CD4-positive, alpha-beta memory T cell (primary cell): ENCODE measurements at regions of chr1 and their contacts with region 1.

Region 1: DNA sequence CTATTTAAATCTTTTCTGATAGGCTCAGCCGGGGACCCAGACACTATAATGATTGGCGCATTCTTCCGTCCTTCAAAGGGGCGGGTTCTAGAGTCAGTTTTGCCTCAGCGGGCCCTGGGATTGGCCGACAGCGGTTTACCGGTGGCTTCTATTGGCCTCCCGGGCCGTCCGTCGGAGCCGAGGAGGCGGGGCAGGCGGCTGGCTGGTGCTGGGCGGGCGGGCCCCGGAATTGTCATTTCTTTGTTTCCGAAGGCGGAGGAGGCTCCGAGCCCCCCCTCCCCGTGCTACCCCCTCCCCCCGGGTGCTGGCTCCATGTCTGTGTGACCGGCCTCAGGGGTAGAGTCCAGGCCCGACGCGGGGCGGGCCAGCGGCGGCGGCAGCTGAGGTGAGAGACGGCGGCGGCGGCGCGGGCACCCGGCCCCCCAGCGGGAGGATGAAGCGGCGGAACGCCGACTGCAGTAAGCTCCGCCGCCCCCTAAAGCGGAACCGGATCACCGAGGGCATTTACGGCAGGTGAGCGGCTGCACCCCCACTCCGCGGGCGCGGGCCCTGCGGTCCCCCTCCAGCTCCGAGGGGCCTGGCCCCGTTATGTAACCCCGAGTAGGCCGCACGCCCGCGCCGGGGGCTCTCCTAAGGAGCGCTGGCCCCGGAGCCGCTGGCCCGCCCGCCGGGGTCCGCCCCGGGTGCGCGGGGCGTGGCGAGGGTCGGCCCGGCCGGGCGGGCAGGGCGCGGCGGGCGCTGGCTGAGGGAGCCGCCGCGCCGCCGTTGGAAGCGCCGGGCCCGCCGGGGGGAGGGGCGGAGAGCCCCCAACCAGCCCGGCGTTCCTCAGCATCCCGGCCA is at the start of gene MACO1:
- DNase-seq: peak; percentile 97 to 99 (median 97)
- H3K4me3 ChIP-seq: peak within 1 kb of the TSS; percentile 49 to 92
- H3K4me3 Mint-ChIP-seq: peak within 1 kb of the TSS; percentile 95 to 99 (median 97)
- H3K27ac ChIP-seq: peak within 1 kb of the TSS; percentile 95
- H3K27ac Mint-ChIP-seq: peak within 1 kb of the TSS; percentile 98 to 100 (median 100)
- H3K4me1 ChIP-seq: peaks cover 49% of the 10 kb centered on the region
- H3K4me1 Mint-ChIP-seq: peaks cover 40 to 56% (median 48%) of the 10 kb centered on the region in 4 donors
- H3K27me3 ChIP-seq: no peaks in the 10 kb centered on the region
- H3K27me3 Mint-ChIP-seq: no peaks in the 10 kb centered on the region
- total RNA-seq, gene MACO1: 20.6 TPM

Region 2: DNA sequence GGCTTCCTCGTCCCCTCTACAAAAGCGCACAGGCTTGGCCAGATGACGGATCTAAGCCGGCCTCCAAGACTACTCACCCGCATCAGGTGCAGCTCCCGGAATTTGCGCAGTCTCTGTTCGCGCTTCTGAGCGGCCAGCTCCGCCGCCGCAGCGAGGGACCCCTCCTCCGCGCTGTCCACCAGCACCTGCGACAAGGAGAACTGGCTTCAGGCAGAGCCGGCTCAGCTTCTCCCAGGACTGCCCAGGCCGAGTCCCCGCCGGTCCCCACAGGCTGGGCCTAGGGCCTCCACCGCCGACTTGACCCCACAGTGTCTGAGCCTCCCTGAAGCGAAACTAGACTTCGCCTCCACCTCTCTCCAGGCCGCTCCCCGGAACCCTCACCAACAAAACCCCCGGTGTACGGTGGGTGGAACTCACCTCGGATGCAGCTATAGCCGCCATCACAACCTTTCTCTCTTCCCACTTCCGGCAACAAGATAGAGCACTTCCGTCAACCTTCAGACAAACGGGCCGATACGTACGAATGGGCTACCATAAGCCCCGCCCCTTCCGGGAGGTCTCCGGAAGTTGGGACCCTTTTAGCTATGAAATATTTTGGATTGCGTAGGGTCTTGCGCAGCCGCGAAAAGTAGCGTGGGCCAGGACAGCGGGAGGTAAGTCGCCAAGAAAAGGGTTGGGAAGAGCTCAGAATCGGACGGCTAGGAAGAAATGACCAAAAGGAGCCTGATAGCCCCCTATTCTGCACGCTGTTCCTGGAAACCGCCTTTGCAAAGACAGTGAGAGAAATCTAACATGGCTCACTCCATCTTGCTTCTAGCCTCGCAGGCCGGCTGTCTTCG is 198.6 kb before region 1 on chr1 and contains the start of gene SYF2:
- CTCF ChIA-PET with region 1: no interaction called
- POLR2A ChIA-PET with region 1: interaction called, 15 read pairs
- intact Hi-C with region 1: no loop called
- DNase-seq: peak; percentile 88 to 95 (median 91)
- H3K4me3 ChIP-seq: peak within 1 kb of the TSS; percentile 80 to 83
- H3K4me3 Mint-ChIP-seq: no peak within 1 kb of the TSS
- H3K27ac ChIP-seq: peak within 1 kb of the TSS; percentile 94
- H3K27ac Mint-ChIP-seq: no peak within 1 kb of the TSS
- H3K4me1 ChIP-seq: peaks cover 27% of the 10 kb centered on the region
- H3K4me1 Mint-ChIP-seq: peaks cover 13 to 26% (median 15%) of the 10 kb centered on the region in 4 donors
- H3K27me3 ChIP-seq: no peaks in the 10 kb centered on the region
- H3K27me3 Mint-ChIP-seq: no peaks in the 10 kb centered on the region
- total RNA-seq, gene SYF2: 64.3 to 66.8 TPM

Region 3: DNA sequence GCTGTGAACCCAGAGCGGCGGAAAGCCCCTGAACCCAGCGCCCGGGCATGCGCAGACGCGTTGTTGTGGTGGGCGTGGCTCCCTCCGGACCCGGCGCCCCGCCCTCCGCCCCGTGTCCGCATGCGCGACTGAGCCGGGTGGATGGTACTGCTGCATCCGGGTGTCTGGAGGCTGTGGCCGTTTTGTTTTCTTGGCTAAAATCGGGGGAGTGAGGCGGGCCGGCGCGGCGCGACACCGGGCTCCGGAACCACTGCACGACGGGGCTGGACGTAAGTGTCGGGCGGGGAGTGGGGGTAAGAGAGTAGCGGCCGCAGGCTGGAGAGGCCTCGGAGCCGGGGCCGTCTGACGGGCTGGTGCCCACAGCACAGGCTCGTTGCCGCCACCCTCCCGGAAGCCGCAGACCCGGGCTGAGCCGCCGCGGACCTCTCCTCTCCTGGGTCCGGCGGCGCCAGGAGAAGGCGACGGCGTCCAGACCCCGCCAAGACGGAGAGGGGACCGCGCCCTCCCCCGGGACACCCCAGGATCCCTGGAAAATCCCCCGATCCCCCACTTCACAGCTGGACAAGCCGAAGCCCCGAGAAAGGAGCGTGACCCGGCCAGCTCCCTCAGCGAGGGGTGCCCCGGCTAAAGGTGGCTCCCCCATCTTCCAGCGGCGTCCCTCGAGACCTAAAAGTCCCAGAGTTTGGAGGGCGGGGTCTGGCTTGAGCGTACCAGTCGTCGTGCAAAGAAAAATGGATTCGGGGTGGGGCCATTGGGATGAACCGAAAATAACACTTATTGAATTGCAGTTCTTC is 92.5 kb before region 1 on chr1 and contains the start of gene TMEM50A:
- CTCF ChIA-PET with region 1: no interaction called
- POLR2A ChIA-PET with region 1: no interaction called
- intact Hi-C with region 1: loop called (anchors 5 kb)
- DNase-seq: peak; percentile 89 to 94 (median 93)
- H3K4me3 ChIP-seq: peak within 1 kb of the TSS; percentile 52 to 88
- H3K4me3 Mint-ChIP-seq: peak within 1 kb of the TSS; percentile 93 to 98 (median 95)
- H3K27ac ChIP-seq: peak within 1 kb of the TSS; percentile 98
- H3K27ac Mint-ChIP-seq: peak within 1 kb of the TSS; percentile 89 to 98 (median 94)
- H3K4me1 ChIP-seq: peaks cover 37% of the 10 kb centered on the region
- H3K4me1 Mint-ChIP-seq: peaks cover 18 to 58% (median 39%) of the 10 kb centered on the region in 4 donors
- H3K27me3 ChIP-seq: no peaks in the 10 kb centered on the region
- H3K27me3 Mint-ChIP-seq: no peaks in the 10 kb centered on the region
- total RNA-seq, gene TMEM50A: 90.9 to 95.3 TPM

Region 4: GRCh38 chr1:25476186-25477097 is 45.6 kb after region 1 on chr1:
- CTCF ChIA-PET with region 1: no interaction called
- POLR2A ChIA-PET with region 1: no interaction called
- intact Hi-C with region 1: loop called (anchors 5 kb)
- DNase-seq: no peak
- H3K4me3 ChIP-seq: no peak overlapping the region
- H3K4me3 Mint-ChIP-seq: no peak overlapping the region
- H3K27ac ChIP-seq: no peak overlapping the region
- H3K27ac Mint-ChIP-seq: peak overlapping the region in 4 of 7 donors; percentile 6 to 75 (median 40)
- H3K4me1 ChIP-seq: peaks cover 30% of the 10 kb centered on the region
- H3K4me1 Mint-ChIP-seq: peaks cover 24 to 45% (median 35%) of the 10 kb centered on the region in 4 donors
- H3K27me3 ChIP-seq: no peaks in the 10 kb centered on the region
- H3K27me3 Mint-ChIP-seq: no peaks in the 10 kb centered on the region

Region 5: GRCh38 chr1:25526753-25527152 is 95.9 kb after region 1 on chr1:
- CTCF ChIA-PET with region 1: no interaction called
- POLR2A ChIA-PET with region 1: no interaction called
- intact Hi-C with region 1: no loop called
- DNase-seq: no peak
- H3K4me3 ChIP-seq: no peak overlapping the region
- H3K4me3 Mint-ChIP-seq: no peak overlapping the region
- H3K27ac ChIP-seq: no peak overlapping the region
- H3K27ac Mint-ChIP-seq: peak overlapping the region in 1 of 7 donors; percentile 9
- H3K4me1 ChIP-seq: no peaks in the 10 kb centered on the region
- H3K4me1 Mint-ChIP-seq: peaks cover 0 to 6% (median 3%) of the 10 kb centered on the region in 4 donors
- H3K27me3 ChIP-seq: no peaks in the 10 kb centered on the region
- H3K27me3 Mint-ChIP-seq: no peaks in the 10 kb centered on the region

Region 6: GRCh38 chr1:25537153-25537831 is 106.4 kb after region 1 on chr1:
- CTCF ChIA-PET with region 1: no interaction called
- POLR2A ChIA-PET with region 1: no interaction called
- intact Hi-C with region 1: no loop called
- DNase-seq: no peak
- H3K4me3 ChIP-seq: no peak overlapping the region
- H3K4me3 Mint-ChIP-seq: no peak overlapping the region
- H3K27ac ChIP-seq: no peak overlapping the region
- H3K27ac Mint-ChIP-seq: peak overlapping the region in 2 of 7 donors; percentile 41 to 79
- H3K4me1 ChIP-seq: no peaks in the 10 kb centered on the region
- H3K4me1 Mint-ChIP-seq: peaks cover 2 to 5% (median 3%) of the 10 kb centered on the region in 4 donors
- H3K27me3 ChIP-seq: no peaks in the 10 kb centered on the region
- H3K27me3 Mint-ChIP-seq: no peaks in the 10 kb centered on the region

Region 7: GRCh38 chr1:25549273-25550154 is 118.6 kb after region 1 on chr1:
- CTCF ChIA-PET with region 1: no interaction called
- POLR2A ChIA-PET with region 1: no interaction called
- intact Hi-C with region 1: loop called (anchors 5 kb)
- DNase-seq: peak; percentile 71 to 92 (median 72)
- H3K4me3 ChIP-seq: peak overlapping the region in 1 of 2 donors; percentile 23
- H3K4me3 Mint-ChIP-seq: peak overlapping the region; percentile 72 to 93 (median 80)
- H3K27ac ChIP-seq: peak overlapping the region; percentile 67
- H3K27ac Mint-ChIP-seq: peak overlapping the region; percentile 75 to 99 (median 96)
- H3K4me1 ChIP-seq: peaks cover 98% of the 10 kb centered on the region
- H3K4me1 Mint-ChIP-seq: peaks cover 68 to 98% (median 92%) of the 10 kb centered on the region in 4 donors
- H3K27me3 ChIP-seq: no peaks in the 10 kb centered on the region
- H3K27me3 Mint-ChIP-seq: no peaks in the 10 kb centered on the region